ENCODE measurements at regions of chr13 and their contacts with region 1.

Region 1: GRCh38 chr13:73608711-73609485 is 525.3 kb downstream of the KLF12 start:
- DNase-seq: no peak
- ATAC-seq: no peak
- H3K4me3 ChIP-seq: no peak overlapping the region
- H3K4me3 Mint-ChIP-seq: no peak overlapping the region
- H3K27ac ChIP-seq: no peak overlapping the region
- H3K27ac Mint-ChIP-seq: no peak overlapping the region
- H3K4me1 ChIP-seq: no peaks in the 10 kb centered on the region
- H3K4me1 Mint-ChIP-seq: peaks cover 2 to 9% (median 4%) of the 10 kb centered on the region in 3 donors
- H3K27me3 ChIP-seq: no peaks in the 10 kb centered on the region
- H3K27me3 Mint-ChIP-seq: no peaks in the 10 kb centered on the region

Region 2: GRCh38 chr13:72745260-72745659 is 863.6 kb before region 1 on chr13:
- CTCF ChIA-PET with region 1: no interaction called
- POLR2A ChIA-PET with region 1: no interaction called
- DNase-seq: no peak
- ATAC-seq: no peak
- H3K4me3 ChIP-seq: no peak overlapping the region
- H3K4me3 Mint-ChIP-seq: no peak overlapping the region
- H3K27ac ChIP-seq: no peak overlapping the region
- H3K27ac Mint-ChIP-seq: peak overlapping the region in 1 of 2 donors; percentile 68
- H3K4me1 ChIP-seq: no peaks in the 10 kb centered on the region
- H3K4me1 Mint-ChIP-seq: peaks cover 0 to 28% (median 19%) of the 10 kb centered on the region in 3 donors
- H3K27me3 ChIP-seq: no peaks in the 10 kb centered on the region
- H3K27me3 Mint-ChIP-seq: no peaks in the 10 kb centered on the region

Region 3: GRCh38 chr13:73622381-73622780 is 13.5 kb after region 1 on chr13:
- CTCF ChIA-PET with region 1: no interaction called
- POLR2A ChIA-PET with region 1: no interaction called
- DNase-seq: no peak
- ATAC-seq: no peak
- H3K4me3 ChIP-seq: peak overlapping the region in 1 of 2 donors; percentile 23
- H3K4me3 Mint-ChIP-seq: peak overlapping the region in 2 of 3 donors; percentile 31 to 52
- H3K27ac ChIP-seq: no peak overlapping the region
- H3K27ac Mint-ChIP-seq: peak overlapping the region; percentile 18 to 49
- H3K4me1 ChIP-seq: peaks cover 15 to 40% of the 10 kb centered on the region in 2 experiments
- H3K4me1 Mint-ChIP-seq: peaks cover 37 to 64% (median 53%) of the 10 kb centered on the region in 3 donors
- H3K27me3 ChIP-seq: no peaks in the 10 kb centered on the region
- H3K27me3 Mint-ChIP-seq: no peaks in the 10 kb centered on the region

Region 4: DNA sequence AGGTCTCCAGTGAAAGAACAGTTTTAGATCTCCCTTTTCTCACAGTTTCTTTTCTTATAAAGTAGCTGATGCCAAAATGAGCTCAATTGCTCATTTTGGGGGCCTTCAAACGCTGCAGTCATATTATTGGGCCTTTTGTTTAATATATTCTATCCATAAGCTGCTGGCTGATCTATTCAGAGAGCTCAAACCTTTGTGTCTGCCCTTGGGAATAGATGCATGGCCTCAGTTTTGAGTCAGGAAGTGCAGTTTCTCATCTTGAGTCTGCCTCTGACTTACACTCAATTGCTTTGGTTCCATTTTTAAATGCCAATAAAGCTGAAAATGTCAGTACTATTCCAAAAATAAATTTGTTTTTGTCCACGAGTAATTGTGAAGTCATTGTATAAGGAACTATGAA is 56.4 kb after region 1 on chr13:
- CTCF ChIA-PET with region 1: no interaction called
- POLR2A ChIA-PET with region 1: no interaction called
- DNase-seq: no peak
- ATAC-seq: no peak
- H3K4me3 ChIP-seq: no peak overlapping the region
- H3K4me3 Mint-ChIP-seq: no peak overlapping the region
- H3K27ac ChIP-seq: no peak overlapping the region
- H3K27ac Mint-ChIP-seq: no peak overlapping the region
- H3K4me1 ChIP-seq: peaks cover 0 to 4% of the 10 kb centered on the region in 2 experiments
- H3K4me1 Mint-ChIP-seq: peaks cover 4 to 11% (median 7%) of the 10 kb centered on the region in 3 donors
- H3K27me3 ChIP-seq: peaks cover 0 to 4% of the 10 kb centered on the region in 2 experiments
- H3K27me3 Mint-ChIP-seq: no peaks in the 10 kb centered on the region

Region 5: DNA sequence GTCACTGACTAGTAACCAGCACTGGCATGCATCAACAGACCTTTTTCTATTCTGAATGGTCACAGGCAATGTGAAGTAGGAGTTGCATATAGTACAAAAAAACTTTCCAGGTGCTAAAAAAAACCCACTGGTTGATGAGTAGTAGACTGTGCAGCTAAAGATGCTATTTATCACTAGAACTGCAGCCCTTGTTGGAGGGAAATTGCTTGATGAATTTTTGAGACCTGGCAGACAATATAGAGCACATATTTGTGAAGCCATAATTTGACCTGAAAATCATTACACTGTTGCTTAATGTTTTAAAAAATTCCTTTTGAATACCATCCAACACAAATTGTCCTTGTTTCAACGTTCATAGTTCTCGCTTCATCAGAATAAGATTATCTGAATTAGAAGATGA is 84.3 kb after region 1 on chr13:
- CTCF ChIA-PET with region 1: interaction called in 1 of 2 experiments, 10 read pairs
- POLR2A ChIA-PET with region 1: no interaction called
- DNase-seq: no peak
- ATAC-seq: no peak
- H3K4me3 ChIP-seq: no peak overlapping the region
- H3K4me3 Mint-ChIP-seq: no peak overlapping the region
- H3K27ac ChIP-seq: no peak overlapping the region
- H3K27ac Mint-ChIP-seq: no peak overlapping the region
- H3K4me1 ChIP-seq: peaks cover 0 to 4% of the 10 kb centered on the region in 2 experiments
- H3K4me1 Mint-ChIP-seq: peaks cover 10 to 17% (median 14%) of the 10 kb centered on the region in 3 donors
- H3K27me3 ChIP-seq: no peaks in the 10 kb centered on the region
- H3K27me3 Mint-ChIP-seq: no peaks in the 10 kb centered on the region